Activated CD4-positive, alpha-beta memory T cell treated with anti-CD3 and anti-CD28 coated beads for 36 hours (primary cell): ENCODE measurements at regions of chr7 and their contacts with region 1.

Region 1: GRCh38 chr7:103074519-103075336 is at the starts of genes ARMC10 and FBXL13:
- DNase-seq: peak; percentile 93
- H3K4me3 Mint-ChIP-seq: peak within 1 kb of the TSS; percentile 95
- H3K27ac Mint-ChIP-seq: peak within 1 kb of the TSS; percentile 88
- H3K4me1 Mint-ChIP-seq: peaks cover 39% of the 10 kb centered on the region
- H3K27me3 Mint-ChIP-seq: no peaks in the 10 kb centered on the region
- total RNA-seq, gene ARMC10: 49.7 to 53.3 TPM
- total RNA-seq, gene FBXL13: 0.45 to 0.63 TPM

Region 2: DNA sequence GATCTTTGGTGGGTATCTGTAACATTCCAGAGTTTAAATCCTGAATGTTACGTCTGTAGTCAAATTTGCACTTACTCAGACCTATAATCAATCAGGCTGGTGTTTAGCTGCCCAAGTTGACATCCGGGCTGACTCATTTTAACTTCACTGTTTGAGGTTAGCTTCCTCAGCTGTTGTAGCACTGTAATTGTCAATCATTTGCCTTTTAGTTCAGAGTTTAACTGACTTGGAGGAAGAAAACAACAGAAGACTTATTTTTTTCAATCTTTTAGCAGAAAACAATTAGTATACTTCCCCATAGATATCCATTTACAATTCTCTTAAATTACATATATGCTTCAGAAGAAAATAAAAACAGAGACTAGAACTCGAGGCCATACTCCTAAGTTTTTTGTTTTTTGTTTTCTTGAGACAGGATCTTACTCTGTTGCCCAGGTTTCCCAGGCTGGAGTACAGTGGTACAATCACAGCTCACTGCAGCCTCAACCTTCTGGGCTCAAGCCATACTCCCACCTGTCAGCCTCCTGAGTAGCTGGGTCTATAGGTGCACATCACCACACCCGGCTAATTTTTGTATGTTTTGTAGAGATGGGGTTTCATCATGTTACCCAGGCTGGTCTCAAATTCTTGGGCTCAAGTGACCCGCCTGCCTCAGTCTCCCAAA is 200.4 kb before region 1 on chr7:
- CTCF ChIA-PET with region 1: no interaction called
- POLR2A ChIA-PET with region 1: no interaction called
- intact Hi-C with region 1: loop called (anchors 10 kb)
- DNase-seq: peak; percentile 51
- H3K4me3 Mint-ChIP-seq: no peak overlapping the region
- H3K27ac Mint-ChIP-seq: no peak overlapping the region
- H3K4me1 Mint-ChIP-seq: peaks cover 21% of the 10 kb centered on the region
- H3K27me3 Mint-ChIP-seq: no peaks in the 10 kb centered on the region

Region 3: GRCh38 chr7:103148994-103149807 is 74.5 kb after region 1 on chr7 and contains the start of gene NAPEPLD:
- CTCF ChIA-PET with region 1: interaction called, 4 read pairs
- POLR2A ChIA-PET with region 1: interaction called, 3 read pairs
- intact Hi-C with region 1: loop called (anchors 1 kb)
- DNase-seq: peak; percentile 73
- H3K4me3 Mint-ChIP-seq: peak within 1 kb of the TSS; percentile 91
- H3K27ac Mint-ChIP-seq: peak within 1 kb of the TSS; percentile 92
- H3K4me1 Mint-ChIP-seq: peaks cover 36% of the 10 kb centered on the region
- H3K27me3 Mint-ChIP-seq: no peaks in the 10 kb centered on the region
- total RNA-seq, gene NAPEPLD: 8.4 to 9.3 TPM

Region 4: DNA sequence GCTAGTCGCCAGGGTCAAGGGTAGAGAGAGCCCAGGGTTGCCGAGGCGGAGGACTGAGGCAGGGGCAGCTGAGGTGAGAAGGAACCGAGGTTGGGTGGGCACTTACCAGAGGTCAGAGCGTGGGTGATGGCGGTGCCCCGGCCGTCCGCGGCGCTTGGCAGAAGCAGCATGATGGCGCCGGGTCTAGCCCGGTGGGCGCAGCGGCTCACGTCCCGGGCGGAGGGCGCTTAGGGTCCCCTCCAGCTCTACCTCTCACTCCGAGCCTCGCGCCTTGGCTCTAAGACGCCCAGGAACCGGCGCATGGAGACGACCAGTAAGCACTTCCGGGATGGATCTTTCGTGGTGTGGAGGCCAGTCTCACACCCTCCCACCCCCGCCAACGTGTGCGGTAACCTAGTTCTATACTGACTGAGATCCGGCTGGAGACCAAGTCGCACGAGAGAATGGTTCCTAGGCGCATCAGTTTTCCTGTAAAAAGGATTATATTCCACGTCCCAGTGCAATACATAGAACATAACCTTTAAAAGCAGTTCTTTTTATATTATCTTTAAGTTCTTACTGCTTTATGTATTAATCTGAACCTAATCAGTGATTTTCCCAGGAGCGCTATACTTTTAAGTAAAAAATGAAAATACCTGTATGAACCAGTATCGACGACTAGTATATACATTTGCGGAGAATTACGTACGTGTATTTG is 269.9 kb after region 1 on chr7 and contains the start of gene DNAJC2:
- CTCF ChIA-PET with region 1: no interaction called
- POLR2A ChIA-PET with region 1: interaction called, 6 read pairs
- intact Hi-C with region 1: loop called (anchors 2 kb)
- DNase-seq: peak; percentile 90
- H3K4me3 Mint-ChIP-seq: peak within 1 kb of the TSS; percentile 90
- H3K27ac Mint-ChIP-seq: peak within 1 kb of the TSS; percentile 96
- H3K4me1 Mint-ChIP-seq: peaks cover 51% of the 10 kb centered on the region
- H3K27me3 Mint-ChIP-seq: no peaks in the 10 kb centered on the region
- total RNA-seq, gene DNAJC2: 51.1 to 51.5 TPM

Region 5: DNA sequence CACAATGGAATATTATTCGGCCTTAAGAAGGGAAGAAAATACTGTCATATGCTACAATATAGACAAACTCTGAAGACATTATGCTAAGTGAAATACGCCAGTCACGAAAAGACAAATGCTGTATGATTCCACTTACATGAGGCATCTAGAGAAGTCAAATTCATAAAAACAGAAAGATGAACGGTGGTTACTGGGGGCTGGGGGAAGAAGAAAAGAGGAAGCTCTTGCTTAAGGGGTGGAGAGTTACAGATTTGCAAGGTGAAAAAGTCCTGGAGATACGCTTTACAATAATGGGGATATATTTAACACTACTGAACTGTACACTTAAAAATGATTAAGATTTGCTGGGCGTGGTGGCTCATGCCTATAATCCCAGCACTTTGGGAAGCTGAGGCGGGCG is 321.7 kb after region 1 on chr7:
- CTCF ChIA-PET with region 1: no interaction called
- POLR2A ChIA-PET with region 1: no interaction called
- intact Hi-C with region 1: loop called (anchors 10 kb)
- DNase-seq: no peak
- H3K4me3 Mint-ChIP-seq: no peak overlapping the region
- H3K27ac Mint-ChIP-seq: no peak overlapping the region
- H3K4me1 Mint-ChIP-seq: no peaks in the 10 kb centered on the region
- H3K27me3 Mint-ChIP-seq: no peaks in the 10 kb centered on the region